ENCODE measurements at regions of chr12 and their contacts with region 1.

Region 1: DNA sequence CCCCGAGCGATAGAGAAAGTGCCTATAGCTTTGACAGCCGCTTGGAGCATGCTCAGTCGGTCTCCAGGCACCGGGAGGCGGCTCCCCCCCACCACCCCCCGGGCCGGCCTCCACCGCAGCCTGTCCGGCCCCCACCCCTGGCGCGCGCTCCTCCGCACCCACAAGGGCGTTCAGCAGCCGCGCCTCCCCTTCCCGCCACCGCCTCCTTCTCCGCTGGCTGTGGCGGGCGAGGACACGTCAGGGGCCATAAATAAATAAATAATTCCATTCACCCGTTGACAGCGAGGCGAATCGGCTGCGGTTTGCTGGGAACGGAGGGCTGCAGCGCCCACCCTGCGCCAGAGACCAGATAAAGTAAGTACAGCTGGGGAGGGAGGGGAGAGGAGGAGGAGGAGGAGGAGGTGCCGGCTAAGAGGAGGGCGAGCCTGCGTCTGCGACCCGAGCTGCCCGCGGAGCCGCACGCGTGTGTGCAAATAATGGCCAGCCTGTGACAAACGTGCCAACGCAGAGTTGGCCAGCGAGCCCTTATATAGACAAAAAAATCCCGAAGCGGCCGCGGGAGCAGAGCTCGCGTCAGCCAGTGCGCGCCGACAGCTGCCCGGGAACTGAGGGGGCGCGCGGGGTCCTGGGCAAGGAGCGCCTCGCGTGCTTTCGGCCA is at the start of gene SLC16A7:
- DNase-seq: no peak
- ATAC-seq: peak; percentile 72
- H3K4me3 ChIP-seq: peak within 1 kb of the TSS; percentile 87
- H3K27ac ChIP-seq: peak within 1 kb of the TSS; percentile 89
- H3K4me1 ChIP-seq: no peaks in the 10 kb centered on the region
- H3K27me3 ChIP-seq: no peaks in the 10 kb centered on the region
- CTCF ChIP-seq: 0 out of 6 replicates have a peak, but pooled peaks of 1 of the 3 experiments have one; percentile 4
- EP300 ChIP-seq: no peak
- POLR2A ChIP-seq: peak; percentile 73
- RAD21 ChIP-seq: no peak
- polyA plus RNA-seq, gene SLC16A7: 1.5 to 4.2 TPM

Region 2: GRCh38 chr12:59559696-59560095 is 36.3 kb before region 1 on chr12:
- CTCF ChIA-PET with region 1: no interaction called
- POLR2A ChIA-PET with region 1: no interaction called
- RAD21 ChIA-PET with region 1: no interaction called
- SMC1A ChIA-PET with region 1: no interaction called
- in situ Hi-C with region 1: no loop called
- intact Hi-C with region 1: no loop called
- DNase-seq: no peak
- ATAC-seq: no peak
- H3K4me3 ChIP-seq: no peak overlapping the region
- H3K27ac ChIP-seq: no peak overlapping the region
- H3K4me1 ChIP-seq: no peaks in the 10 kb centered on the region
- H3K27me3 ChIP-seq: no peaks in the 10 kb centered on the region
- CTCF ChIP-seq: no peak
- EP300 ChIP-seq: no peak
- POLR2A ChIP-seq: no peak
- RAD21 ChIP-seq: no peak

Region 3: GRCh38 chr12:59776482-59776881 is 180.5 kb after region 1 on chr12:
- CTCF ChIA-PET with region 1: no interaction called
- POLR2A ChIA-PET with region 1: no interaction called
- RAD21 ChIA-PET with region 1: no interaction called
- SMC1A ChIA-PET with region 1: no interaction called
- in situ Hi-C with region 1: no loop called
- intact Hi-C with region 1: loop called (anchors 5 kb)
- DNase-seq: no peak
- ATAC-seq: no peak
- H3K4me3 ChIP-seq: no peak overlapping the region
- H3K27ac ChIP-seq: no peak overlapping the region
- H3K4me1 ChIP-seq: no peaks in the 10 kb centered on the region
- H3K27me3 ChIP-seq: no peaks in the 10 kb centered on the region
- CTCF ChIP-seq: no peak
- EP300 ChIP-seq: no peak
- POLR2A ChIP-seq: no peak
- RAD21 ChIP-seq: no peak

Region 4: DNA sequence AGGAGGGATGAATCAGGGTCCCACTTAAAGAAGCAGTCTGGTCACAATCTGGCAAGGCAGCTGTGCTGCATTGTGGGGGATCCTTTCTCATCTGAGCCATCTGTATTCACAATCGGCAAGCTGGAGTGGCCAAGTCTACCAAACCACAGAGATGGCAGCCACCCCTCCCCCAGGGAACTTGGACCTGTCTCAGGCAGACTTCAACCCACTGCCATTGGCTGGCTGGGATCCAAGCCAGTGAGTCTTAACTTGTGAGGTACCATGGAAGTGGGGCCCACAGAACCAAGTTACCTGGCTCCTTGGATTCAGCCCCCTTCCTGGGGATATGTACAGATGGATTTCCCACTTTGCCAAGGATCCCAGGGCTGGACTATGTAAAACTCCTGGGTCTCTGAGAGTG is 196.6 kb after region 1 on chr12:
- CTCF ChIA-PET with region 1: no interaction called
- POLR2A ChIA-PET with region 1: no interaction called
- RAD21 ChIA-PET with region 1: no interaction called
- SMC1A ChIA-PET with region 1: no interaction called
- in situ Hi-C with region 1: no loop called
- intact Hi-C with region 1: loop called (anchors 5 kb)
- DNase-seq: no peak
- ATAC-seq: no peak
- H3K4me3 ChIP-seq: no peak overlapping the region
- H3K27ac ChIP-seq: no peak overlapping the region
- H3K4me1 ChIP-seq: no peaks in the 10 kb centered on the region
- H3K27me3 ChIP-seq: no peaks in the 10 kb centered on the region
- CTCF ChIP-seq: no peak
- EP300 ChIP-seq: no peak
- POLR2A ChIP-seq: no peak
- RAD21 ChIP-seq: no peak

Region 5: GRCh38 chr12:60176891-60177290 is 580.9 kb after region 1 on chr12:
- CTCF ChIA-PET with region 1: no interaction called
- POLR2A ChIA-PET with region 1: no interaction called
- RAD21 ChIA-PET with region 1: no interaction called
- SMC1A ChIA-PET with region 1: no interaction called
- in situ Hi-C with region 1: no loop called
- intact Hi-C with region 1: no loop called
- DNase-seq: no peak
- ATAC-seq: no peak
- H3K4me3 ChIP-seq: no peak overlapping the region
- H3K27ac ChIP-seq: no peak overlapping the region
- H3K4me1 ChIP-seq: no peaks in the 10 kb centered on the region
- H3K27me3 ChIP-seq: no peaks in the 10 kb centered on the region
- CTCF ChIP-seq: no peak
- EP300 ChIP-seq: no peak
- POLR2A ChIP-seq: no peak
- RAD21 ChIP-seq: no peak